Posterior cingulate gyrus (tissue), 11 donors: ENCODE measurements at regions of chr16 and their contacts with region 1.

Region 1: DNA sequence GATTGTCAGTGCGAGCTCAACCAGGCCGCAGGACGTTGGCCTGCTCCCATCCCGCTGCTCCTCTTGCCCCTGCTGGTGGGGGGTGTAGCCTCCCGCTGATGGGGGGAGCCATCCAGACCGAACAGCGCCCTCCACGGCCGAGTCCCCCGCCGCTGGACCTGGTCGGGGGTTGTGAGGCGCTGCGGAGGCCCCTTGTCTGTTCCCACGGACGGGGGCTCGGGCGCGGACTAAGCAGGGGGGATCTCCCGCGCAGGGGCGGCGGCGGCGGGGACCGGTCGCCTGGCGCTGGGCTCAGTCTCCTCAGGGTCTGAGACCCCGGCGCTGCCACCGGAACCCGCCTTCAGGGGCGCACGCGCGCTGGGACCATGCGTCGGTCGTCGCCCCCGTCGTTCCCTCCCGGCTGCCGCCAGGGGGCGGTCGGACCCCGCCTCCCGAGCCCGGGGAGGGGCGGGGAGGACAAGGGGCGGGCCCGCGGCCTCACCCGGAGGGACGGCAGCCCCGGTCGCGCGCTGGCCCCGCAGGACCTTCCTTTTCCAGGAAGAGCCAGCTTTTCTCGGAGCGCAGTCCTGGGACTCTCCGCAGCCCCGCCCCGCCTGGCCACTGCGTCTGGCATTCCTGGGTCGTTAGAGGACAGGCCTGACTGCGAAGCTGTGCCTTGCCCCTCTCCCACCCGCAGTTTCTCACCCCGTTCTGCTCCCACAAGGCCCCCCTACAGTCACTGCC is 6.3 kb upstream of the IL32 start:
- DNase-seq: peak; percentile 61 to 97 (median 78)

Region 2: DNA sequence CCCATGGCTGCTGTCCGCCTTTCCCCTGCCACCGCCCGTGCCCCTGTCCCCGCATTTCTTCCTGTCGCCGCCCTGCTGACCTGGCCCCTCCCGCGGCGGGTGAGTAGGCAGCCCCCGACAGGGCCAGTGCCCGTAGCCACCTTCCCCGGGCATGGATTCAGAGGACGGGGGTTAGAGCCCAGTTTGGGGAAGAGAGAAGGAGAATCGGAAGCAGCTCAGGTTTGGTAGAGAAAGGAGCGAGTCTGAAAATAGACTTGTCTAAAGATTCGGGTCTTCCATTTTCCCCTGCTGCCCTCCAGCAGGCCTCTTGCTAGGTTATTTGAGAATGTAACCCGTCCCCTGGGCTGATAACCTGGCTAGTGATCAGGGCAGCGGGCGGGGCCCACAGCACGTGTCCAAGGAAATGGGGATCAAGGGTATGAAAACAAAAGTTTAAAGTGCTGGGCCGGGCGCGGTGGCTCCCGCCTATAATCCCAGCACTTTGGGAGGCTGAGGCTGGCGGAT is 54.3 kb before region 1 on chr16:
- intact Hi-C with region 1: no loop called
- DNase-seq: no peak

Region 3: DNA sequence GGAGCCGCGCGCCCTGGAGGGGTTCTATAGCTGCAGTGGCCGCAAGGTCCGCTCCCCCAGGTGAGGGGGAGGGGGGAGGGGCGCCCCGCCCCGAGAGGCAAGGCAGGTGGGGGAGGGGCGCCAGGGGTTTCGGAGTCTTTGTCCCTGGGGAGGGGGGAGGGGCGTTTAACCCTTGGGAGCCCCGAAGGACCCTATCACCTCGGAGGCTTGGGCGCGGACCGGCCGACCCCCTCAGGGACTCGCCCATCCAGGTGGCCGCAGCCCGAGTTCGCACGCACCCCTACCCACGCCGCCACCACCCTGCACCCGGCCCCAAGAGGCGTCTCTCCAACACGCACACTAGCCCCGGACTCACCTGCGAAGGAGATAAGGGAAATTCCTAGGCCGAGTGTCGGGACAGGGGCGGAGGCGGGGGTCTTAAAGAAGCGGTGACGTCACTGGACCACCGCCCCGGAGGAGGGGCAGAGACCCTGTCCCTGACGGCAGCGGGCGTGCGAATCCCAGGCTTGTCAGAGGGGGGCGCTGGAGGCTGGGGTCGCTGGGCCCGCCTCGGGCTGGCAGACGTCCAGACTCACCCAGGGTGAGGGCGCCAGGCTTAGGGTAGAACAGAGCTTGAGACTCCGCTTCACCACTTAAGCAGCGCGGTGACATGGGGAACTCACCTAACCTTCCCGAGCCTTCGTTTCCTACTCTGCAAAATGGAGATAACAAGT is 41.2 kb before region 1 on chr16 and contains the start of gene CLDN6:
- intact Hi-C with region 1: no loop called
- DNase-seq: no peak

Region 4: GRCh38 chr16:3112058-3112880 is 53.1 kb after region 1 on chr16 and contains the start of gene ZNF205:
- intact Hi-C with region 1: loop called (anchors 5 kb)
- DNase-seq: peak; percentile 72 to 97 (median 82)

Region 5: DNA sequence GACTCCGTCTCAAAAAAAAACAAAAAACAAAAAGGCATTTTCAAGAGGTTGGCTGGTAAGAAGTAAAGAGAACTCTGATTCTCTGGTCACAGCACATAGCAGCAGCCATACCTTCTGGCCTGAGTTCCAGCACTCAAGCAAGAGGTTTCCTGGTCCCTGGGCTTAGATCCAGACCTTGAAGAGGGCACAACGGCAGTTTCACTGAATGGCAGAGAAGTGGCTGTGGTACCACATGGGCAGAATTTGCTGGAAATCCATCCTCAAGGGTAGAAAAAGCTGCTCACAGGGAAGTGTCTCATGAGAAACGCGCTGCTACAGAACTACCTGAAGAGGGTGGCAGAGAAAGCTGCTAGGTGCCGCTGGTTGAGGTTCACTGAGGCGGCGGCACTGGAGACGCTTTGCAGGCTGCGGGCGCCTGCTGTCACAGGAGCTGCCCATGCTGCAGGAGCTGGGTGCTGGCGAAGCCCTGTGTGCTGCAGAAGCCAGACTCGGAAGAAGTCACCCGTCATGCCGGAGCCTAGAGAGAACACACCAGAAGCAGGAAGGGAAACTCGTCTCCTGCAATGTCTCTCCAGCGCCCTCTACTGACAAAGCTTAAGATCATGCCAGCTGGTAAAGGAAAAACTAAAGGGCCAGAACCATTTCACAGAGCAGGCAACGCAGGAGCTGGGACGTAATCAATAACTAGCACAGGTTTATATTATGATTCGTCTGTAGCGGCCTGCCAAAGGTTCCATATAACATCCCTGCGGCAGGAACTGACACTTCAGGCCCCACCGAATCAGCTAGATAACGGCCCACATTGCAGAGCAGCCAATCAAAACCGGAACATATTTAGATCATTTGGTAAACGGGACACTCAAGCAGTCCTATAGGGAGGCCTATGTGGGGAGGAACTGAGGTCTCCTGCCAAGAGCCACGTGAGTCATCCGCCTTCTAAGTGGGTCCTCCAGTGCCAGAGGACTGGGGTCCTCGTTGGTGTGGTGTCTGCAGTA is 70.3 kb after region 1 on chr16:
- intact Hi-C with region 1: loop called (anchors 2 kb)
- DNase-seq: peak; percentile 52 to 96 (median 70)

Region 6: GRCh38 chr16:3143612-3144320 is 84.6 kb after region 1 on chr16:
- intact Hi-C with region 1: no loop called
- DNase-seq: peak in 3 of 10 donors; percentile 8 to 74 (median 65)

Region 7: DNA sequence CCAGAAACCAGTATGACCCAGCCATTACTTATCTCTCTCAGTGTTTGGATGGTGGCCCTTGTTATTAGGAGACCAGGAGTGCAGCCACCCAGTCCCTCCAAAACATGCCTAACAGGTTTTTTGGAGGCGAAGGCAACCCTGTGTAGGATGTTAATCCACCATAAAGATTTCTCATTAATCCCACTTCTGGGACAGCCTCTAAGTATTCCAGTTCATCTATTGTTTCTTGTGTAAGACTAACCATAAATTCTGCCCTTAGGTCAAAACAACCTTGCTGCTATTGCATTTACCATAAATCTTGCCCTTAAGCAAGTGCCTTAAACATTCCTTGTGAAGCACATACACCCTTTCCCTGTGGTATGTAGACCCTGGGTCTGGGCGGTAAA is 107.3 kb after region 1 on chr16:
- intact Hi-C with region 1: loop called (anchors 2 kb)
- DNase-seq: no peak